ENCODE measurements at regions of chr2 and their contacts with region 1.

Region 1: DNA sequence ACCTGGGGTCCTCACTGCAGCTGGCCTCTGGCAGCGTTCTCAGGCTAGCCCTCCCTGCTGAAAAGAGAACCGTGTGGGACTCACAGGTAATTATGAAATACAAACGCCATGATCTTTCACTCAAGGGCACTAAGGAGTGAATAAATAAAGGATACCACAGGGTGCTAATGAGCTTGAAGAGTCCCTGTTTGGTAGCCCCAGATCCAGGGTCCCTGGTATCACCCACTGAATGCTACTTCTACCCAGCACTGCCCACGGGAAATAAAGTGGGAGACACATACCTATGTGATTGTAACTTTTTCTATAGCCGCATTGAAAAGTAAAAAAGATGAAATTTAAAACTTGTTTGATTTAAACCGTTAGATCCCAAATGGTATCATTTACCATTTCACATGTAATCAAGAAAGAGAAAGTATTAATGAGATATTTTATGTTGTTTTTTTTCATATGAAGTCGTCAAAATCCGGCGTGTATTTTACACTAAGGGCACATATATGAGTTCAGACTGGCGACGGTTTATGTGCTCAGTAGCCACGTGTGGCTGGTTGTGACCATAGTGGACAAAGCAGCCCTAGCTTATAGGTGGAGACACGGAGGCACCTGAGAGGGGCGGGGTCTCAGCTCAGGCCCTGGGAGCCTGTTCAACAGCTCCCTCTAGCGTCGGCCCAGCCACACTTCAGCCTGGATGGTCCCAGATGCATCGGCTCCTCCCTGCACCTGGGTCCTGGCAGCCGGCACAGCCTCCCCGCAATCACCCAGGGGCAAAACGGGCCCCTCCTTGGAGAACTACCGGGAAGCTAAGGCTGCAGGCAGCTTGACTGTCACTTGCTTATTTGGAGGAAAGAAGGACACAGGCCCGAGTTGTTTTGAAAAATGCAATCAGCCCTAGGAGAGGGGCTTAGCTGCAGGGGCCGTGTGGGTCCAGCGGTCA is 39.2 kb downstream of the ODC1 start:
- DNase-seq: peak; percentile 87 to 92
- H3K4me3 ChIP-seq: no peak overlapping the region
- H3K27ac ChIP-seq: peak overlapping the region; percentile 40 to 88 (median 61)
- H3K4me1 ChIP-seq: peaks cover 24 to 66% of the 10 kb centered on the region in 2 donors
- H3K27me3 ChIP-seq: no peaks in the 10 kb centered on the region
- CTCF ChIP-seq: peak; percentile 88 to 98 (median 94)
- POLR2A ChIP-seq: peak in 1 of 2 donors; percentile 34

Region 2: DNA sequence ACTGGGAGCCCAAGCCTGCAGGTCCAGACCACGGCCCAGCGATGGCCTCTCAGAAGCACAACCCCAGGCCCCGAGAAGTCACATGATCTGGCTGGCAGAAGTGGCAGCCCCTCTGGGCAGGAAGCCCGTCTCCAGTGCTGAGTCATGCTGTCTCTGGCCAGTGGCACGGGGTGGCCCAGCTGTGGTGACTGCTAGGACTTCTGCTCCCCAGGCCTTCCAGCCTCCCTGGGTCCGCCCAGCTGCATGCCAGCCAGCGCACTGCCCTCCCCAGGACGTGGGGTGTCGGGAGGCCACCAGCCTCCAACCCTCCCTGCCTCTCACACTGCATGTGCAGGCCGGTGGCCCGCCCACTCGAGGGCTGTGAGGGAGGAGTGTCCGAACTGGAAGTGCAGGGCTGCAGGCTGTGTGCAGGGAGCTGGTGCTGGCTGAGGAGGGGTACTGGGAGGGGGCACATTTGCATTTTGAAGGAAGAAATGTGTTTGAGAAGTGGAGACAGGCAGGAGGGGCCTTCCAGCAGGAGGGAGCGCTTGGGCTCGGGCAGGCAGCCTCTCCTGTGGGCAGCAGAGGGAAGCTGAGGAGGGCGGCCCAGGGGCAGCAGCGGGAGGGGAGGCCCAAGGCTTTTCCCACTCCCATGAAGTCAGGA is 123.2 kb before region 1 on chr2:
- intact Hi-C with region 1: loop called (anchors 5 kb)
- DNase-seq: peak; percentile 96
- H3K4me3 ChIP-seq: no peak overlapping the region
- H3K27ac ChIP-seq: peak overlapping the region; percentile 93 to 99 (median 95)
- H3K4me1 ChIP-seq: peaks cover 24 to 38% of the 10 kb centered on the region in 2 donors
- H3K27me3 ChIP-seq: no peaks in the 10 kb centered on the region
- CTCF ChIP-seq: peak in 1 of 6 experiments; percentile 11
- POLR2A ChIP-seq: peak in 1 of 2 donors; percentile 38

Region 3: GRCh38 chr2:10302479-10303180 is 106.3 kb before region 1 on chr2 and contains the start of gene HPCAL1:
- intact Hi-C with region 1: loop called (anchors 5 kb)
- DNase-seq: peak; percentile 87 to 89
- H3K4me3 ChIP-seq: peak within 1 kb of the TSS; percentile 75 to 85 (median 84)
- H3K27ac ChIP-seq: peak within 1 kb of the TSS; percentile 56 to 79 (median 59)
- H3K4me1 ChIP-seq: peaks cover 15 to 18% of the 10 kb centered on the region in 2 donors
- H3K27me3 ChIP-seq: no peaks in the 10 kb centered on the region
- CTCF ChIP-seq: peak; percentile 13 to 70 (median 45)
- POLR2A ChIP-seq: peak; percentile 61 to 94
- total RNA-seq, gene HPCAL1: 39.9 to 84.2 (median 64.8) TPM

Region 4: DNA sequence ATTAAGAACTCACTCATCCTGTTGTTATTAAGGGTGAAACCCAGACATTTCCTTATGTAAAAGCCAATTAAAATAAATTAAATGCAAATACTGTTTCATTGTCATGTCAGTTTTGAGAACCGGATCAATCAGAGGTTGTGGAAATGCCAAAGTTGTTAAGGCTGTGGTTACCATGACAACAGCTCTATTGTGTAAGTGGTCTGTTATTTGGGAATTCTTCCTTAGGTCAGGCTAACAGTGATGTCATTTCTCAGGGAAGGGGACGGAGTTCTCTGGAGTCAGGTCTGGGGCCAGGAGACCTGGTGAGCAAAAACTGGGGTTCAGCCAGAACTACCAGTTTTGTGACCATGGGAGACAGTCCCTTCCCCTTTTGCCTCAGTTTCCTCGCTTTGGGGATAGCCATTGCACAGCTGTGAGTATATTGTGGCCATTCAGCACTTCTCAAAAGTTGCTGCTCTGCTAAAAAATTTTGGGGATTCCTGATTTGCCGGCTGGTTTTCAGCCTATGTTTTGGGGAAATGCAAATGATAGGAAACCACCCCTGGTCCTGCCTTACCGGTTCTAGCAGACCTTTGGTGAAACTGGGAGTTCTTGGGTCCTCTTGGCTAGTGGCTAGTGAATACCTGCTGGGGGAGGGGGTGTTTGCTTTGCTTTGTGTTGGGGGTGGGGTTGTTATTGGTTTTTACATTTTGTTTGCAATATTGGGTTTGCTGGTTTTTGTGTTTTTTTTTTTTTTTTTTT is 84.6 kb before region 1 on chr2:
- intact Hi-C with region 1: no loop called
- DNase-seq: no peak
- H3K4me3 ChIP-seq: no peak overlapping the region
- H3K27ac ChIP-seq: no peak overlapping the region
- H3K4me1 ChIP-seq: peaks cover 9 to 11% of the 10 kb centered on the region in 2 donors
- H3K27me3 ChIP-seq: no peaks in the 10 kb centered on the region
- CTCF ChIP-seq: no peak
- POLR2A ChIP-seq: no peak

Region 5: DNA sequence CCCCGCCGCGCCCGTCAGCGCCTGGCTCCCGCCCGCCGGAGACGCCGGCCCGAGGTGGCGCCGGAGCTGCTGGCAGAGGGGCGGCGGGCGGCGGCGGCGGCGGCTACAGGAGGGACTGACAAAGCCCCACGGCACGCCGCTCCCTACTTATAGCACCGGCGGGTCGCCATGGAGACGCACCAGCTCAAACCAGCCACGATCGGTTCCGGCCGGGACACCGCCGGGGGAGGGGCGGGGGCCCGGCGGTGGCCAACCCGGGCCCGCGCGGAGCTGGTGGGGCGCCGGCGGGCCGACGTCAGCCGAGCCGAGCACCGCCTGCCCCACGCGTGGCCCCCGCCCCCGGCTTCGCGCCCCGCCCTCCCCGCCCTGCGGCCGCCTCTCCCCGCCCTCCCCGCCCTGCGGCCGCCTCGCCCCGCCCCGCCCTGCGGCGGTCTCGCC is 39.3 kb after region 1 on chr2 and contains the start of gene ODC1:
- intact Hi-C with region 1: no loop called
- DNase-seq: peak; percentile 97 to 98
- H3K4me3 ChIP-seq: peak within 1 kb of the TSS; percentile 44 to 80 (median 57)
- H3K27ac ChIP-seq: peak within 1 kb of the TSS; percentile 88 to 94 (median 91)
- H3K4me1 ChIP-seq: peaks cover 28 to 51% of the 10 kb centered on the region in 2 donors
- H3K27me3 ChIP-seq: no peaks in the 10 kb centered on the region
- CTCF ChIP-seq: no peak
- POLR2A ChIP-seq: peak; percentile 76 to 82
- total RNA-seq, gene ODC1: 72.0 to 126 (median 84.9) TPM

Measured in thyroid gland (tissue), 4 donors.